ENCODE measurements at regions of chr19 and their contacts with region 1.

Region 1: DNA sequence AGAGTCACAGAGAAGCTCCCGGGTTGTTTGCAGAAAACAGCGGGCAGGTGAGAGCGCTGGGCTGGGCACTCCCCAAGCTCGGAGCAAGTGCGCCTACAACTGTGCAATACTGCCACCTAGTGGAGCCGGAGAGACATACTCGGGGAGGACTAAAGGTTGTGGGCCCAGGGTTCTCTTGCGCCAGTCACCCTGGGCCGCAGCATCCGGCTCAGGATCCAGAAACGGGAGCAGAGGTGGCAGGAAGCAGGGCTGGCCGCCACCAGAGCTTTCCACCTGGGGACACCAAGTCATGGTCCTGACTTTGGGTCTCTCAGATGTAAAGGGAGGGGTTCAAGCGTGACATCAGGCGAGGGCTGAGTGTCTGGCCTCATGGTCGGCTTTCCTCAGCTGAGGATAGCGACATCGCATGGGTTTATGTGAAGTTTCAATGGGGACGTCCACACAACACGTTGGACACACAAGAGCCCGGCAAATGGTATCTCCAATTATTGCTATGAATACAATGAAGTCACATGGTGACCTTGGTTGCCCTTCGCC is 11.2 kb upstream of the KLK4 start:
- DNase-seq: peak; percentile 65
- H3K4me3 Mint-ChIP-seq: no peak overlapping the region
- H3K27ac Mint-ChIP-seq: no peak overlapping the region
- H3K4me1 Mint-ChIP-seq: peaks cover 9% of the 10 kb centered on the region
- H3K27me3 Mint-ChIP-seq: peaks cover 14% of the 10 kb centered on the region

Region 2: GRCh38 chr19:50537762-50538230 is 384.6 kb before region 1 on chr19:
- intact Hi-C with region 1: loop called (anchors 1 kb)
- DNase-seq: peak; percentile 31
- H3K4me3 Mint-ChIP-seq: no peak overlapping the region
- H3K27ac Mint-ChIP-seq: no peak overlapping the region
- H3K4me1 Mint-ChIP-seq: no peaks in the 10 kb centered on the region
- H3K27me3 Mint-ChIP-seq: peaks cover 4% of the 10 kb centered on the region

Region 3: DNA sequence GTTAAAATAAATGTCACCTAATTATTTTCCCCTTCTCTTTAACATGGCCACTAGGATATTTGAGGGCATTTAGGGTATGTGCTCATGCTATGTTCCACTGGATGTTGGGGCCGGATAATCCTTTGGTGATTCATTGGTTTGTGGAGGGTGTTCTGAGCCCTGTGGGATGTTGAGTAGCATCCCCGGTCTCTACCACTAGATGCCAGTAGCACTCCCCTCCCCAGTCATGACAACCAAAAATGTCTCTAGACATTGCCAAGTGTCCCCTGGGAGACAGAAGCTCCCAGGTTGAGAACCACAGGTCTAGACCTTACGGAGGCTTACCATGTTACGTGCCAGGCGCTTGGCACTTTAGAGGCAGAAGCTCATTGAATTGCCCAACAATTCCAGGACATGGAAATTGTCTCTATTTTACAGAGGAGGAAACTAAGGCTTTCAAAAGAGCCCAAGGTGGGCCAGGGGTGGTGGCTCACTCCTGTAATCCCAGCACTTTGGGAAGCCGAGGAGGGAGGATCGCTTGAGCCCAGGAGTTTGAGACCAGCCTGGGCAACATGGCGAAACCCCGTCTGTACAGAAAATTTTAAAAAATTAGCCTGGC is 216.9 kb before region 1 on chr19:
- intact Hi-C with region 1: loop called (anchors 1 kb)
- DNase-seq: no peak
- H3K4me3 Mint-ChIP-seq: no peak overlapping the region
- H3K27ac Mint-ChIP-seq: no peak overlapping the region
- H3K4me1 Mint-ChIP-seq: no peaks in the 10 kb centered on the region
- H3K27me3 Mint-ChIP-seq: peaks cover 13% of the 10 kb centered on the region

Region 4: GRCh38 chr19:50718255-50719118 is 203.9 kb before region 1 on chr19:
- intact Hi-C with region 1: no loop called
- DNase-seq: no peak
- H3K4me3 Mint-ChIP-seq: no peak overlapping the region
- H3K27ac Mint-ChIP-seq: no peak overlapping the region
- H3K4me1 Mint-ChIP-seq: no peaks in the 10 kb centered on the region
- H3K27me3 Mint-ChIP-seq: peaks cover 55% of the 10 kb centered on the region

Region 5: GRCh38 chr19:50777754-50778303 is 144.6 kb before region 1 on chr19:
- intact Hi-C with region 1: loop called (anchors 1 kb)
- DNase-seq: no peak
- H3K4me3 Mint-ChIP-seq: no peak overlapping the region
- H3K27ac Mint-ChIP-seq: no peak overlapping the region
- H3K4me1 Mint-ChIP-seq: peaks cover 16% of the 10 kb centered on the region
- H3K27me3 Mint-ChIP-seq: peaks cover 47% of the 10 kb centered on the region

Region 6: GRCh38 chr19:50906217-50906616 is 16.2 kb before region 1 on chr19:
- intact Hi-C with region 1: loop called (anchors 1 kb)
- DNase-seq: no peak
- H3K4me3 Mint-ChIP-seq: no peak overlapping the region
- H3K27ac Mint-ChIP-seq: no peak overlapping the region
- H3K4me1 Mint-ChIP-seq: no peaks in the 10 kb centered on the region
- H3K27me3 Mint-ChIP-seq: peaks cover 33% of the 10 kb centered on the region

Measured in activated T-helper 1 cell treated with anti-CD3 and anti-CD28 coated beads, Interleukin-12 subunit alpha, Interleukin-12 subunit beta, Interleukin-2, Interleukin-4 antibody, amounts not matched to agents 30 ng/mL and 10 ng/mL and 1 ng/mL, durations not matched to agents 14 hours and 24 hours and 36 hours (primary cell).